Psoas muscle (tissue), 8 donors: ENCODE measurements at regions of chr12 and their contacts with region 1.

Region 1: DNA sequence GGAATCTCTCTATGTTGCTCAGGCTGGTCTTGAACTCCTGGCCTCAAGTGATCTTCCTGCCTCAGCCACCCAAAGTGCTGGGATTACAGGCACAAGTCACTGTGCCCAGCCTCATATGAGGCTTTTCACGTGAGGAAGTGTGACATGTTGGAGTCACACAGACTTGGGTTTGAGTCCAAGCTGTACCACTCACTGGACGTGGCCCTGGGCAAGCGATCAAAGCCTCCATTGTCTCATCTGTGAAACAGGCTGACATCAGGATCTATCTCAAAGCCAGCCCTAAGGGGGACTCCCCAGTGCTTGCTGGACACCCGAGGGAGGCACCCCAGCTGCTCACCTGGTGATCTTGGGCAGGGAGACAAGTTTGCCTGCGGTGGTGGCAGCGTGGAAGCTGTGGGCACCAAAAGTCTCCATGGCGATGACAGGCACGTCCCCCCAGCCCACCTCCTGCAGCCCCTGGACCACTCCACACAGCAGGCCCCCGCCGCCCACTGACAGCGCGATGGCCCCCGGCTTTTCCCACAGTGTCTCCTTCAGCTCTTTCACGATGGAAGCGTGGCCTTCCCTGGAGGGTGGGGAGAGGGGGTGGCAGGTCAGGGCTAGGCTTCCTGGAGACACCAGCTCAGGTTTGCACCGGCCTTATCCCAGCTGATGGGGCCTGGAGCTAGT is 6.7 kb downstream of the SDS start:
- DNase-seq: no peak
- ATAC-seq: no peak
- H3K4me3 ChIP-seq: no peak overlapping the region
- H3K27ac ChIP-seq: no peak overlapping the region
- H3K4me1 ChIP-seq: no peaks in the 10 kb centered on the region
- H3K27me3 ChIP-seq: peaks cover 0 to 16% (median 2%) of the 10 kb centered on the region in 3 donors
- CTCF ChIP-seq: no peak

Region 2: DNA sequence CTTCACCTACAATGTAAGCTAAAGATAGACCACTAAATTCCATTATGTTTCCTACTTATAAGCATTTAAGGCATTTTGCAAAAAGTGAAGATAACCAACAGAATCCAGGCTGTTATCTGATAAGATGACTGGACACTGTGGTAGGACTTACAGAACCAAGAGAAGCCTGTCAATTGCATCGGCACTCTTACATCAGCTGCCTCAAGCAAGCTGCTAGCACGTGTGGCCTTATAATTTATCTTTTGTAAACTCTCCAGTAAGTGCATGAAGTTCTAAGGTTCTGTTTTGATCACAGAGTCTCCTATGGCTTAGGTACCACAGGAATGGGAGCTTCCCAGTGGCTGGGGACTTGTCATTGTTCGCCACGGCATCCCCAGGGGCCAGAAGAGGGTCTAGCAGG is 1182.9 kb before region 1 on chr12:
- intact Hi-C with region 1: loop called in 1 of 2 experiments (anchors 5 kb)
- DNase-seq: no peak
- ATAC-seq: no peak
- H3K4me3 ChIP-seq: no peak overlapping the region
- H3K27ac ChIP-seq: no peak overlapping the region
- H3K4me1 ChIP-seq: no peaks in the 10 kb centered on the region
- H3K27me3 ChIP-seq: no peaks in the 10 kb centered on the region
- CTCF ChIP-seq: no peak